Caco-2 (cell line): ENCODE measurements at regions of chr6 and their contacts with region 1.

Region 1: GRCh38 chr6:41901882-41902519 is 6.8 kb upstream of the USP49 start:
- DNase-seq: peak in 1 of 2 experiments; percentile 35
- H3K4me3 ChIP-seq: no peak overlapping the region
- H3K4me3 Mint-ChIP-seq: no peak overlapping the region
- H3K27ac Mint-ChIP-seq: no peak overlapping the region
- H3K4me1 ChIP-seq: peaks cover 24% of the 10 kb centered on the region
- H3K4me1 Mint-ChIP-seq: peaks cover 27% of the 10 kb centered on the region
- H3K27me3 ChIP-seq: no peaks in the 10 kb centered on the region
- H3K27me3 Mint-ChIP-seq: no peaks in the 10 kb centered on the region
- CTCF ChIP-seq: no peak

Region 2: GRCh38 chr6:41887331-41887751 is 14.7 kb before region 1 on chr6:
- CTCF ChIA-PET with region 1: interaction called, 3 read pairs
- POLR2A ChIA-PET with region 1: interaction called, 13 read pairs
- intact Hi-C with region 1: no loop called
- DNase-seq: no peak
- H3K4me3 ChIP-seq: no peak overlapping the region
- H3K4me3 Mint-ChIP-seq: no peak overlapping the region
- H3K27ac Mint-ChIP-seq: no peak overlapping the region
- H3K4me1 ChIP-seq: peaks cover 5% of the 10 kb centered on the region; the same call in 1 of the 2 replicates
- H3K4me1 Mint-ChIP-seq: peaks cover 5% of the 10 kb centered on the region
- H3K27me3 ChIP-seq: no peaks in the 10 kb centered on the region
- H3K27me3 Mint-ChIP-seq: no peaks in the 10 kb centered on the region
- CTCF ChIP-seq: no peak

Region 3: GRCh38 chr6:41941280-41942066 is 39.5 kb after region 1 on chr6 and contains the start of gene CCND3:
- CTCF ChIA-PET with region 1: interaction called, 10 read pairs
- POLR2A ChIA-PET with region 1: no interaction called
- intact Hi-C with region 1: loop called (anchors 1 kb)
- DNase-seq: peak; percentile 90 to 93
- H3K4me3 ChIP-seq: peak within 1 kb of the TSS; percentile 94
- H3K4me3 Mint-ChIP-seq: peak within 1 kb of the TSS; percentile 80
- H3K27ac Mint-ChIP-seq: peak within 1 kb of the TSS; percentile 86
- H3K4me1 ChIP-seq: peaks cover 17% of the 10 kb centered on the region
- H3K4me1 Mint-ChIP-seq: peaks cover 17% of the 10 kb centered on the region
- H3K27me3 ChIP-seq: no peaks in the 10 kb centered on the region
- H3K27me3 Mint-ChIP-seq: no peaks in the 10 kb centered on the region
- CTCF ChIP-seq: no peak
- total RNA-seq, gene CCND3: 24.7 and 26.9 TPM in 2 replicates

Region 4: DNA sequence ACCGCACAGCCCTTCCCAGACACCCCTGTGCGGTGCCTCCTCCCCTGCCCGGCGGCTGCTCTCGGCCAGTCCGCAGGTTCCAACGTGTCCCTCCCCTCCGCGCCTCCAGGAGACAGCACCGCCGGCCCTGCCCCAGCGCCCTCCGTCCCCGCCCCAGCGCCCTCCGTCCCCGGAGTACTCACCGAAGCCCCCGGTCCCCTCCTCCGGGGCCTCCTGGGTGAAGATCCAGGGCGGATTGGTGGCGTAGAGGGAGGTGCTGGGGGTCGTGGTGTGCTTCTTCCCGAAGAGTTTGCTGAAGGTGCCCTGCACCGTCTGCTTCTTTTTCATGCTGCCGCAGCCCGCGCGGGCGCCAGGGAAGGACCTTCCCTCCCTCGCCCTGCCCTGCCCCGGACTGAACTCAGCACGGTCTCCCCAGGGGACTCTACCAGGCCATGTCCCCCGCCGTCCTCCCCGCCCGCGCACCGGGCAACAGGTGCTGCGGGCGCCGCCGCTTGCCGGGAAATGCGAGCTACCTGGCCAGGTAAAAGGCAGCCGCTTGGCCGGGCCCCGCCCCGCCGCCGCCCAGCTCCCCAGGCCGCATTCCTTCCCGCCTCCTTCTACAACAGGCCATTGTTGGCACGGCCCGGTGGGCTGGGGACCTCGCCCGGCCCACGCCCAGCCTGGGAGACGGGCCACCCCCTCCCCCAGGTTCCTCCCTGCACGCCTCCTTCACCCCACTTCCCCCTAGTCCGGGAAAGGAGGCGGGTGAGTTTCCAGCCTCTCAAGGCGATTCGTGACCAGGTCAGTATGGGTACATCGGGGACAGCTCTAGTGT is 240.3 kb after region 1 on chr6 and contains the start of gene C6orf132:
- CTCF ChIA-PET with region 1: no interaction called
- POLR2A ChIA-PET with region 1: no interaction called
- intact Hi-C with region 1: no loop called
- DNase-seq: peak; percentile 90
- H3K4me3 ChIP-seq: peak within 1 kb of the TSS; percentile 82
- H3K4me3 Mint-ChIP-seq: peak within 1 kb of the TSS; percentile 78
- H3K27ac Mint-ChIP-seq: peak within 1 kb of the TSS; percentile 95
- H3K4me1 ChIP-seq: peaks cover 44% of the 10 kb centered on the region
- H3K4me1 Mint-ChIP-seq: peaks cover 34% of the 10 kb centered on the region
- H3K27me3 ChIP-seq: no peaks in the 10 kb centered on the region
- H3K27me3 Mint-ChIP-seq: no peaks in the 10 kb centered on the region
- CTCF ChIP-seq: peak in 1 of 2 experiments; percentile 13
- total RNA-seq, gene C6orf132: 56.2 and 61.2 TPM in 2 replicates

Region 5: DNA sequence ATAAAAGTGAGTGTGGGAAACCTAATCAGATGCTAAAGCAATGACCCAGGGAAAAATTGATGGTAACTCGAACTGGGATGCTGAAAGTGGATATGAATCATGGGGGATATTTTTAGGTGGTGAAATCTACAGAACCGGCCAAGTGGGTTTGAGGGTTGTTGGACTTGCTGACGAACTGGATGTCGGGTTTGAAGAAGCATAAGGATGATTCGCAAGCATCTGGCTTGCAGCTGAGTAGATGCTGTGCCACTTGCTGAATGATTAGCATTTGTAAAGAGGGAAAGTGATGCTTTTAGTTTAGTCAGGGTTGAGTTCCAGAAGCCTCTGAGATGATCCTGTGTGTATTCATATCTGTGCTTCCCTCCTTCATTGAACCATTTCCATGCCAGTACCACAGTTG is 716.7 kb after region 1 on chr6:
- CTCF ChIA-PET with region 1: no interaction called
- POLR2A ChIA-PET with region 1: no interaction called
- intact Hi-C with region 1: no loop called
- DNase-seq: no peak
- H3K4me3 ChIP-seq: no peak overlapping the region
- H3K4me3 Mint-ChIP-seq: no peak overlapping the region
- H3K27ac Mint-ChIP-seq: no peak overlapping the region
- H3K4me1 ChIP-seq: no peaks in the 10 kb centered on the region
- H3K4me1 Mint-ChIP-seq: no peaks in the 10 kb centered on the region
- H3K27me3 ChIP-seq: no peaks in the 10 kb centered on the region
- H3K27me3 Mint-ChIP-seq: no peaks in the 10 kb centered on the region
- CTCF ChIP-seq: no peak